ENCODE measurements at regions of chr17 and their contacts with region 1.

Region 1: DNA sequence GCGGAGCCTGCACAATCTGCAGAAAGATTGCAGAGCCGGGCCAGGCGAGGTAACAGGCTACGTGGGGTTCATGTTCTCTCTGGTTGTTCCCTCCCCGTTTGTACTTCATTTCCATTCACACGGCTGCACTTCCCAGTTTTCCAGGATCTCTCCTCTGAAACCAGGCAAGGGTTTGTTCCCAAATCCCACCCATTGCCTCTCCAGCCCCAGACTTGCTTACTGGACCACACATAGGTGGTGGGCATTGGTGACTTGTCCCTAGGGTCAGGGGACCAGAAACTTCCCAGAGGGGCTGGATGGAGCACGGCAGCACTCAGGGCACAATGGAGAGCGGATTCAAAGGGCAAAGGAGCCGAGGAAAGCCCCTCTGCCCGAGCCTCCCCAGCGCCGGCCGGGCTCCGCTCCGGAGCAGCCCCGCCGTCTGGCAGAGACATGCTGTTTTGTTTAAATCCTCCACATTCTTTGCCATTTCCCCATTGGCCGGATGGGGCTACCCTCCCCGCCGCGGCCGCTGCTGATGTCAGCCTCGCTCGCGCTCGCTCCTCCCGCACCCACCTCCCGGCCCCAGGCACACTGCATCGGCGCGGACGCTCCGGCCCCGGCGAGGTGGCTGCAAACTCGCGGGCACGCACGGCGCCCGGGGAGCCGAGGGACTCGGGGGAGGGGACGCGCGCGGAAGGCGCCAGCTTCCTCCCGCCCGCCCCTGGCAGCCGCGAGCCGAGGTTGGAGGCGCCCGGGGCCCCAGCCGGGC is at the start of gene PITPNC1:
- DNase-seq: peak; percentile 65 to 77
- H3K4me3 ChIP-seq: peak within 1 kb of the TSS; percentile 77
- H3K27ac ChIP-seq: no peak within 1 kb of the TSS
- H3K4me1 ChIP-seq: peaks cover 33% of the 10 kb centered on the region
- H3K27me3 ChIP-seq: no peaks in the 10 kb centered on the region
- CTCF ChIP-seq: no peak; the same call in 1 of the 2 replicates
- total RNA-seq, gene PITPNC1: 6.0 and 7.1 TPM in 2 replicates

Region 2: DNA sequence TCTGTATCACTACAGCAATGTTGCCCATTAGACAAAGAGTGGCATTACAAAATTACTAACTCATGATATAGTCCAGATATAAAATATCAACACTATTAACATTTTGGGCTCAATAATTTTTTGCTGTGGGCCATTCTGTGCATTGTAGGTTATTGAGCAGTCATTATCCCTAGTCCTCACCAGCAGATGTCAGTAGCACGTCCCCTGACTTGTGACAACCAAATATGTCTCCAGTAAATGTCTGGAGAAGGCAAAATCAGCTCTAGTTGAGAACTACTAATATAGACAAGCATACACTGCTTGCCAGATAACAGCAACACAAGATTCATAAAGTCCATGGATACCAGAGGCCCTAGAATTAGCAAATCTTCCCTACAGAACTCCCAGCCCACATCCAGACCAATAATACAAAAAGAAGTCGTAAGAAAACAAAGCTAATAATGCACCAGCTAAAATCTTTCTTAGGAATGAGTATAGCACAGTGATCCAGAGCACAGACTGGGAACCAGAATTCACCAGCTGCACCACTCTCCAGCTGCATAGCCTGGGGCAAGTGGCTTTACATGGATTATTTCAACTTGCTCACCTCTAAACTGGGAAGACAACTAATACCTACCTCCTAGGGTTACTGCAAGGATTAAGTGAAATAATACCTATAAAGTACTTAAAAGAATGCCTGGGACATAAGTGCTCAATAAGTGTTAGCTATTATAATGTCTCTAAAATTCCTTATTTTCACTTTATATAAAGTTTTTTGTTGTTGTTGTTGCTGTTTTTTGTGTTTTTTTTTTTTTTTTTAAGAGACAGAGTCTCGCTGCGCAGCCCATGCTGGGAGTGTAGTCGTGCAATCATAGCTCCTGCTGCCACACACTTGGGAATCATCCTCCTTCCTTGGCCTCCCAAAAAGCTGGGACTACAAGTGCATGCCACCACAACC is 155.6 kb before region 1 on chr17:
- CTCF ChIA-PET with region 1: interaction called, 10 read pairs
- POLR2A ChIA-PET with region 1: no interaction called
- intact Hi-C with region 1: no loop called
- DNase-seq: no peak
- H3K4me3 ChIP-seq: no peak overlapping the region
- H3K27ac ChIP-seq: no peak overlapping the region
- H3K4me1 ChIP-seq: no peaks in the 10 kb centered on the region
- H3K27me3 ChIP-seq: no peaks in the 10 kb centered on the region
- CTCF ChIP-seq: no peak

Region 3: DNA sequence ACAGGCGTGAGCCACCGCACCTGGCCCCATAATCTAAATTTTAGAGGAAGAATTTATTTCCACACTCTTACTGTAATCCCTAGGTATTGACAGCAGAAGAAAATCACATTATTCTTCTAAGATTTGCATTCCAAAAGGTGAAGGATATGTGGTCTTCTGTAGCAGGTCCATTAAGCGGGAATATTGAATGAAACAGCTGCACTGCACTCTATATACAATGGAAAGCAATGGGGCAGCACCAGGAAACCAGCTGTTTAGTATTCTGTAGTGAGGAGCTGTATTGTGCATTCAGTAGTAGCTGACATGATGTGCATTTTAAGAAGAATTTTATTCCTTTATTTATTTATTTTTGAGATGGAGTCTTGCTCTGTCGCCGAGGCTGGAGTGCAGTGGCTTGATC is 60.1 kb before region 1 on chr17:
- CTCF ChIA-PET with region 1: no interaction called
- POLR2A ChIA-PET with region 1: no interaction called
- intact Hi-C with region 1: no loop called
- DNase-seq: no peak
- H3K4me3 ChIP-seq: no peak overlapping the region
- H3K27ac ChIP-seq: no peak overlapping the region
- H3K4me1 ChIP-seq: no peaks in the 10 kb centered on the region
- H3K27me3 ChIP-seq: no peaks in the 10 kb centered on the region
- CTCF ChIP-seq: no peak

Region 4: GRCh38 chr17:67336859-67337258 is 40.1 kb before region 1 on chr17:
- CTCF ChIA-PET with region 1: no interaction called
- POLR2A ChIA-PET with region 1: no interaction called
- intact Hi-C with region 1: no loop called
- DNase-seq: no peak
- H3K4me3 ChIP-seq: no peak overlapping the region
- H3K27ac ChIP-seq: no peak overlapping the region
- H3K4me1 ChIP-seq: no peaks in the 10 kb centered on the region; the same call in 1 of the 2 replicates
- H3K27me3 ChIP-seq: no peaks in the 10 kb centered on the region
- CTCF ChIP-seq: no peak

Region 5: DNA sequence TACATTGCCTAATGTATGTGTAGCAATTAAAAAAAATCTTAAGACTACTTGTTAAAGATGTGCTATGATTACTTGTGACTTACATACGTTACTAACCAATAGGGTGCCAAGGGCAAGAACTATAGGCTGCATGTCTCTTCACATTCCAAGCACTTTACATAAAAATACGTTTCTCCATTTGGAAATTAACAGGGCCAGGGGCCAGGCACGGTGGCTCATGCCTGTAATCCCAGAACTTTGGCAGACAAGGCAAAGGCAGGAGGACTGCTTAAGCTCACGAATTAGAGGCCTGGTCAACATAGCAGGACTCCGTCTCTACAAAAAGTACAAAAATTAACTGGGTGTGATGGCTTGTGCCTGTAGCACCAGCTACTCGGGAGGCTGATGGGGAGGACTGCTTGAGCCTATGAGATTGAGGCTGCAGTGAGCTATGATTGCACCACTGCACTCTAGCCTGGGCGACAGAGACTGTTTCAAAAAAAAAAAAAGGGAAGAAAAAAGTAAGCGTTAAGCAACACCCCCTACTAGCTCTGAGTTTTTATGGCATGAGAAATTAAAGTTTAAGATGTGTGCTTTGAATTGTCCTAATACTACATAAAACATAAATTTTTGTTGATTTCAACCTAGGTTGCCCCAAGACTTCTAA is 22.9 kb before region 1 on chr17:
- CTCF ChIA-PET with region 1: no interaction called
- POLR2A ChIA-PET with region 1: no interaction called
- intact Hi-C with region 1: no loop called
- DNase-seq: no peak
- H3K4me3 ChIP-seq: no peak overlapping the region
- H3K27ac ChIP-seq: no peak overlapping the region
- H3K4me1 ChIP-seq: no peaks in the 10 kb centered on the region
- H3K27me3 ChIP-seq: no peaks in the 10 kb centered on the region
- CTCF ChIP-seq: no peak

Region 6: GRCh38 chr17:67475236-67475937 is 98.5 kb after region 1 on chr17:
- CTCF ChIA-PET with region 1: interaction called, 6 read pairs
- POLR2A ChIA-PET with region 1: interaction called, 7 read pairs
- intact Hi-C with region 1: loop called (anchors 2 kb)
- DNase-seq: peak; percentile 53 to 67
- H3K4me3 ChIP-seq: no peak overlapping the region
- H3K27ac ChIP-seq: no peak overlapping the region
- H3K4me1 ChIP-seq: no peaks in the 10 kb centered on the region
- H3K27me3 ChIP-seq: no peaks in the 10 kb centered on the region
- CTCF ChIP-seq: peak; percentile 92

Region 7: GRCh38 chr17:67689534-67690177 is 312.7 kb after region 1 on chr17:
- CTCF ChIA-PET with region 1: interaction called, 4 read pairs
- POLR2A ChIA-PET with region 1: no interaction called
- intact Hi-C with region 1: loop called (anchors 1 kb)
- DNase-seq: peak; percentile 24 to 51
- H3K4me3 ChIP-seq: no peak overlapping the region
- H3K27ac ChIP-seq: no peak overlapping the region
- H3K4me1 ChIP-seq: no peaks in the 10 kb centered on the region
- H3K27me3 ChIP-seq: no peaks in the 10 kb centered on the region
- CTCF ChIP-seq: peak; percentile 88

Region 8: GRCh38 chr17:67779098-67779672 is 402.3 kb after region 1 on chr17:
- CTCF ChIA-PET with region 1: no interaction called
- POLR2A ChIA-PET with region 1: no interaction called
- intact Hi-C with region 1: loop called (anchors 2 kb)
- DNase-seq: peak in 1 of 2 experiments; percentile 37
- H3K4me3 ChIP-seq: no peak overlapping the region
- H3K27ac ChIP-seq: no peak overlapping the region
- H3K4me1 ChIP-seq: peaks cover 4% of the 10 kb centered on the region; the same call in 1 of the 2 replicates
- H3K27me3 ChIP-seq: no peaks in the 10 kb centered on the region
- CTCF ChIP-seq: peak; percentile 77